ENCODE measurements at regions of chr14 and their contacts with region 1.

Region 1: DNA sequence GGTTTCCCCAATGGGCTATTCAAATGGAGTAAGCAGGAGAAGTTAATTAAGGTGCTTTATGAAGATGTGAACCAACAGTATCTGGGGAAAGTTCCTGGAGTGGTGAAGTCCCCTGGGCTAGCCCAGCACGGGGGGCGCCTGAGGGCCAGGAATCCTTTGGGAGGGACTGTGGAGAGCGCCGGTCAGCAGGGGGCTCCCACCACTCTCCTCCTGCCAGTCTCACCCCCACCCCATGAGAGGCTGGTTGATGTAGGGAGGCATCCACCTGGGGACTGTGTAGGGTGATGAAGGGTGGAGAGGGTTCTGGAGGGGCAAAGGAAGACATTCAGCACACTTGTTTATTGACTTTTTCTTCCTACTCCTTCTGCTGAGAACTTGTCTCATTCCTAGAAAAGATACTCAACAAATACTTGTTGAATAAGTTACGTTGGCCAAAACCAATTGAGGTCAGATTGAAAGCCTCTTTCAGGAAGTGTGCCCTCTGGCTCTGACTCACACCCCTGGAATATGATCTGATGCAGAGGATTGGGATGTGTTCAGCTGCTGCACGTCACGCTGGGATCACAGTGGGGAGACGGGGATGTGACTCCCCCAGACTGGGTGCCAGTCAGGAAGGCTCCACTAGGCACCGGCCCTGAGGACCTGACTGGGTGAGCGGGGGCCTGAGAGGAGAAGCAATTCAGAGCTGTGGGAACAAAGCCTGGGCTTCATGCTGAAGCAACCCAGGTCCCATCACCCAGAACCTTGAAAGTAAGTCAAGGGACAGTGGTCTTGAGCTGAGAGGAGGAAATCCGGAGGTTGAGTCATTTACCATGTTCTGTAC is 4.2 kb downstream of the CEBPE start:
- DNase-seq: peak in 1 of 10 donors; percentile 28
- H3K4me3 ChIP-seq: no peak overlapping the region
- H3K27ac ChIP-seq: peak overlapping the region in 1 of 59 donors; percentile 53
- H3K27me3 ChIP-seq: peaks cover 0 to 8% (median 0%) of the 10 kb centered on the region in 45 donors
- CTCF ChIP-seq: no peak

Region 2: GRCh38 chr14:22668417-22668816 is 446.5 kb before region 1 on chr14:
- intact Hi-C with region 1: no loop called
- DNase-seq: no peak
- H3K4me3 ChIP-seq: no peak overlapping the region
- H3K27ac ChIP-seq: no peak overlapping the region
- H3K27me3 ChIP-seq: no peaks in the 10 kb centered on the region
- CTCF ChIP-seq: no peak

Region 3: DNA sequence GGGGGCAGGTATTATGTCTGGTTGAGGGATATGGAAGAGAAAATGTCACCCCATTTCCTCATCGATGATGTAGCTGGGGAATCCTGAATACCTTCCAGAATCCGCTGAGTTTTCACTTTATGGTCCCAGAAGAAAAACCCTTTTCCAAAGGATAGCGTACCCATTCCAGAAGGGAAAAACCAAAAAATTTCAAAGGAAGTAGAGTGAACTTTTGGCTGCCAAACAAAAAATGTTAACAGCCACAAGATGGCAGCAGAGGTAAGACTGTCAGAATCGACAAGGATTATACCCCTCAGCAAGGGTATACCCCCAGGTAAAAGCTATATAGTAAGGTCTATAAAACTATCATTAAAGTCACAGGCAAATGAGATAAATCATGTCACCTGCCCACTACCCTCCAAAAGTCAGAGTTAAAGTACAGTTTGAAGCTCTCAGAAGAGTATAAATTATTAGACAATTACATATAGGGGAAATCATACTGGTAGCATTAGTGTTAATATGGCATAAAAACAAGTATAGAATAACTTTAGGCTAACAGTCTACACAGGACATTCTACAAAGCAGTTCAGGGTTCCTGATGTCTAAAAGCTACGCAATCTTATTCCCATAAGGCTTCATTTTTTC is 38.0 kb before region 1 on chr14:
- intact Hi-C with region 1: loop called in 1 of 2 experiments (anchors 5 kb)
- DNase-seq: no peak
- H3K4me3 ChIP-seq: no peak overlapping the region
- H3K27ac ChIP-seq: peak overlapping the region in 7 of 59 donors; percentile 2 to 64 (median 14)
- H3K27me3 ChIP-seq: no peaks in the 10 kb centered on the region
- CTCF ChIP-seq: peak; percentile 32 to 78 (median 64)

Region 4: DNA sequence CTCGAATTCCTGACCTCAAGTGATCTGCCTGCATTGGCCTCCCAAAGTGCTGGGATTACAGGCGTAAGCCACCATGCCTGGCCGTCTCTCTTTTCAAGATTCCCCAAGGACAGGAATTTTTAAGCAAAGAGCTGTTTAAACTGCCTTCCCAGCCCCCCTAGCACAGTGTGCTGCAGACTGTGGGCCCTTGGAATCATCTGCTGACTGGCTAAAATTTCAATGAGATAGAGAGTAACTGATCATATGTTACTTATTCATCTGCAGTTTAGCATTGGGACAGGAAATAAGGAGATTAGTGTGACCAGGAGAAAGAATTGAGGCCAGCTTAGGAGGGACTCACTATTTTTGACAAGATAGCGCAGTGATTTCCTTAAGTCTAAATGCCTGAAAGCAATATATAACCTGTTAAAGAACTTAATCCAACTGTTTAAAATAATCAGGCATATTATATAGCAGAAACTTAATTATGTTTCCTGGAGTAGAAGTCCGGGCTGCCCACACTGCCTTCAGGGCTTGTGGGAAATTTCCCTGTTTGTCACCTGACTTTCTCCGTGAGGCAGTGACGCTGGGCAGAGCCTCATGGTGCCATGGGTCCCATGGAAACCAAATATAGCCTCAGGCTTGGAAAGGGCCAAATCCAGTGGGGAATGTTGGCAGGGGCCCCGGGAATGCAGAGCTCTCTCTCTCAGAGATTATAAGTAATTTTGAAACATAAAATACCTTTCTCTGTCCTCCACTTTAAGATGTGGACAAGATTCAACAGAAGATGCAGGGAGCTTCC is 27.0 kb after region 1 on chr14:
- intact Hi-C with region 1: no loop called
- DNase-seq: peak in 2 of 10 donors; percentile 17 to 40
- H3K4me3 ChIP-seq: no peak overlapping the region
- H3K27ac ChIP-seq: peak overlapping the region in 10 of 59 donors; percentile 2 to 61 (median 28)
- H3K27me3 ChIP-seq: no peaks in the 10 kb centered on the region
- CTCF ChIP-seq: no peak